H1 (cell line): ENCODE measurements at regions of chr15 and their contacts with region 1.

Region 1: DNA sequence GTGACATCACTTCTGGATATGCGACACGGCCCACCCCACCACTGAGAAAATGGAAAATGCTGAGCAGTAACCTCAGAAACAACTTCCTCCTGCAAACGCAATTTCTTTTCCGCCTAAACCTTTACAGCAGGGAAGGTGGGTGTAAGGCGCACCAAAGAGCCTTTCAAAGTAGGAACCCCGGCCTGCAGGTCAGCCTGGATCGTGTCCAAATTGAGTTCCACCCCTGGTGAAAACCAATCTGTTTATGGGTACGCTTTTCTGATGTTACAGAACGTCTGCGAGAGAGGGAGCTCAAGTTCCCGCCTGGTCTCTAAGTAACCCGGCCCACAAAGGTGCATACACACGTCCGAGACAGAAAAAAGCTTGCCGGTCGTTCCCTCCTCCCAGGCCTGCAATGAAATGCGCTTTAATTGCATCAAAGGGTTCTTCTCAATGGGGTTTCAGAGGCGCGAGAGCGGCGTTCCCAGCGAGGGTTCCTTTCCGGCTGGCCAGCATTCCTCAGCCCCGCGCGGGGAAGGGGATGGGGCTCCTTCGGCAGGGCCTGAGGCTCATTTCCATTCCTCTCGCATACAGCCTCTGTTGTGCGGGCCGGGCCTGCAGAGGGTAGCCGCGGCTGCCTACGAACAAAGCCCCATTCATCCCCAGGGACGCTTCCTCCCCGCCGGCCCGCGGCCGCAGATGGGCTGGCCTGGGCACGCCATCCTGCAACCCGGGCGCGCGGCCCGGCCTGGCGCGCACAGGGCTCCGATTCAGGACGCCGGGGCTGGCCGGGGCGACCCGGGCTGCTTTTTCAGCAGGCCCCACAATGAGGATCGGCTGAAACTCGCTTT is 138.1 kb downstream of the TMCO5A start:
- DNase-seq: peak; percentile 83 to 86
- H3K4me3 ChIP-seq: peak overlapping the region; percentile 59 to 65 (median 63)
- H3K27ac ChIP-seq: peak overlapping the region; percentile 73
- H3K4me1 ChIP-seq: peaks cover 0 to 19% (median 11%) of the 10 kb centered on the region in 4 experiments; a peak in 5 of 7 replicates
- H3K27me3 ChIP-seq: peaks cover 22 to 51% (median 38%) of the 10 kb centered on the region in 4 experiments
- CTCF ChIP-seq: peak in 1 of 3 experiments; percentile 14; a peak in 2 of 4 replicates
- EP300 ChIP-seq: 0 out of 3 replicates have a peak, but pooled peaks of 1 of the 2 experiments have one; percentile 49
- POLR2A ChIP-seq: peak; percentile 57 to 86
- RAD21 ChIP-seq: peak in 1 of 2 experiments; percentile 35

Region 2: DNA sequence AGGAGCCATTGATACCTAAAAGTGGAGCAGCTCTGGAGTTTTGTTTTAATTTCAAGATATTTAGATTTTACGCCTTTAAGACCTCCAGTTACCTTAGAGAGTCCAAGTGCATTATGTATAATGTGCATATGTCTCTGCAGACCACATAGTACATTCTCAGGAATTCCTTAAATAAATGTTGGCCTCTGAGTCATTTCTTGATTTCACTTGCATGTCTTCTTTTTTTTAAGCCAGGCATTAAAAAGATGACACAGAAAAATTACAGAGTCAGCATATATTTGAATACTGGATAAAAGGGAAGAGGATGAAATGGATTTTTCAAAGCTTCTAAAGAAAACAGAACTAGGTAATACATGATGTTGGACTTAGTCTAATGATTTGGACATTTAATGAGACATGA is 12.9 kb before region 1 on chr15:
- CTCF ChIA-PET with region 1: interaction called, 4 read pairs
- POLR2A ChIA-PET with region 1: interaction called, 11 read pairs
- DNase-seq: no peak
- H3K4me3 ChIP-seq: no peak overlapping the region
- H3K27ac ChIP-seq: peak overlapping the region; percentile 44; the same call in 1 of the 2 replicates
- H3K4me1 ChIP-seq: peaks cover 2 to 21% (median 14%) of the 10 kb centered on the region in 4 experiments; a peak in 6 of 7 replicates
- H3K27me3 ChIP-seq: no peaks in the 10 kb centered on the region
- CTCF ChIP-seq: no peak
- EP300 ChIP-seq: no peak
- POLR2A ChIP-seq: no peak
- RAD21 ChIP-seq: no peak